HepG2 (cell line): ENCODE measurements at regions of chr11 and their contacts with region 1.

Region 1: DNA sequence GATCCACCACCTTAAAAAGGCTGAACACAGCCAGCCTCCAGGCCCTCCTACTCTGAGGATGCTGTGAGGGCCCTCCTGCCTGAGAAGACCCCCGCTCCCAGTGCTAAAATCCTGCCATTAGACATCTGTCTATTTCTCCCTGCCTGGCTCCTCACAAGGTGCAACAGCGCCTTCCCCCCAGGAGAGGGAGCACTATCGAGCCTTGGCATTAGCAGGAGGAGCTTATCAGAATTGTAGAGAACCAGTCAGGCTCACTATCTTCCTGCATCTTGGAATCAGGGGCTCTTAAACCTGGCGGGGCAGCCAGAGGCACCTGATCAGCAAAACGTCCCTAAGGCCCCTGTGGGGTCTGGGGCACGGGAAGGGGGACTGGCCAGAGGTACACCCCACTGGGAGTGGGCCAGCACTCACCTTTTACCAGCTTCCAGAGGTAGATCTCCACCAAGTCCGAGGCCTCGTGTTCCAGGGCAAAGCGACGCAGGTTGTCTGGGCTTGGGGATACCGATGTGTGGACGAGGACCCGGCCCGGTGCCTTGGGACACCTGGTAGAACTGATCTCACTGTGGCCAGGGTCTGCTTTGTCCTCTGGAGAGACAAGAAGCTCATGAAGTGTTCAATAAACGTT is 28.7 kb downstream of the CHRDL2 start:
- DNase-seq: peak; percentile 63
- ATAC-seq: peak; percentile 80
- H3K4me3 ChIP-seq: no peak overlapping the region
- H3K27ac ChIP-seq: no peak overlapping the region
- H3K4me1 ChIP-seq: peaks cover 6% of the 10 kb centered on the region
- H3K27me3 ChIP-seq: peaks cover 4 to 26% of the 10 kb centered on the region in 2 experiments; a peak in 2 of 5 replicates
- CTCF ChIP-seq: peak; percentile 89
- EP300 ChIP-seq: no peak
- POLR2A ChIP-seq: no peak
- RAD21 ChIP-seq: peak; percentile 75

Region 2: DNA sequence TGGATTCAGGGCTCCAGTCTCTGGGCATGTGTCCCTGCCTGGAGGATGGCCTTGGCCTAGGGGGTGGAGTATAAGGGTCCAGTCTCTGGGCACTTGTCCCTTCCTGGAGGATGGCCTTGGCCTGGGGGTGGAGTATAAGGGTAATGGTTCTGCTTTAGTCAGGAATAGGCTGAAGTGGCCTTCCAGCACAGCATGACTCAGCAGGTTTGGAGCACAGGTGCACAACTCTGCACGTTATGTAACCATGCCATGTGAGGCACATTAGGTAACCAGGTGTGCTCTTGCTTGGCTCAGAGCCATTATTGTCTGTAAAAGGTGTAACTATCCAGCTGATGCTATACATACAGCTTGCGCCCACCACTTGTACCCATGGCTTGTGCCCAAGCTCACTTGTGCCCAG is 158.5 kb before region 1 on chr11:
- CTCF ChIA-PET with region 1: no interaction called
- POLR2A ChIA-PET with region 1: no interaction called
- in situ Hi-C with region 1: no loop called
- intact Hi-C with region 1: no loop called
- DNase-seq: no peak
- ATAC-seq: no peak
- H3K4me3 ChIP-seq: no peak overlapping the region
- H3K27ac ChIP-seq: no peak overlapping the region
- H3K4me1 ChIP-seq: no peaks in the 10 kb centered on the region
- H3K27me3 ChIP-seq: peaks cover 0 to 29% of the 10 kb centered on the region in 2 experiments; a peak in 2 of 5 replicates
- CTCF ChIP-seq: no peak
- EP300 ChIP-seq: no peak
- POLR2A ChIP-seq: no peak
- RAD21 ChIP-seq: no peak

Region 3: GRCh38 chr11:74726547-74727182 is 24.2 kb after region 1 on chr11:
- CTCF ChIA-PET with region 1: interaction called, 24 read pairs
- POLR2A ChIA-PET with region 1: interaction called, 4 read pairs
- in situ Hi-C with region 1: no loop called
- intact Hi-C with region 1: loop called (anchors 1 kb)
- DNase-seq: peak; percentile 58
- ATAC-seq: peak; percentile 95
- H3K4me3 ChIP-seq: no peak overlapping the region
- H3K27ac ChIP-seq: no peak overlapping the region
- H3K4me1 ChIP-seq: peaks cover 20% of the 10 kb centered on the region
- H3K27me3 ChIP-seq: peaks cover 4 to 87% of the 10 kb centered on the region in 2 experiments; a peak in 4 of 5 replicates
- CTCF ChIP-seq: peak; percentile 95
- EP300 ChIP-seq: no peak
- POLR2A ChIP-seq: no peak
- RAD21 ChIP-seq: peak; percentile 84

Region 4: DNA sequence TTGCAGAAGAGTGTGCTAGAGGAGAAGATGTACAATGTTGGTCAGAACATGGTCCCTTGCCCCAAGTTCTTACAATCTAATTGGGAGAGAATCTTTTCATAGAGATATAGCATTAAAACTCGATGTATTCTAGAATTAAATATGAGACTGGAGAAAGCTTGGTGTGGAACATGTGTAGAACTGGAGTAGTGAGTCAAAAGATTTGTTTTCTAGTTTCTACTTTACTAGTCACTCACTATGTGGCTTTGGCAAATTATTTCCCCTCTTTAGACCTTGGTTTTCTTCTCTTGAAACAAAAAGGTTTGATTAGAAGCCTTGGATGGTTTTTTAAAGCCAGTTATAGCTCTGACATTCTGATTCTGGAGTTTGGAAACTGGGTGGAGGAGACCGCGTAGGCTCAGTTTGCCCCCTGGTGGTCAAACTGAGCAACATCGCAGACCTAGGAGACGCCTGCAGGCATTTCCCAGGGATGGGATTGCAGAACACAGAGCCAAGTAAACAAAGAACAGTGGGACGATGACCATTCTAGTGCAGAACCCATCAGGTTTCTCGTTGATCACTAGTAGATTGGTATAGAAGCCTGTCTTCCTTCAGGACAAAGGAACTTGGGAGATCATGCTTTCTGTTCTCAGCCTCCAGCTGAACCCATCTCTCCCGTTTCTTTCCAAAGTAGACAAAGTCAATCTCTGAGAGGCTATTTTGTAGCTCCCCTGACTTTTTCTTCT is 37.2 kb after region 1 on chr11:
- CTCF ChIA-PET with region 1: interaction called, 47 read pairs
- POLR2A ChIA-PET with region 1: interaction called, 7 read pairs
- in situ Hi-C with region 1: loop called (anchors 5 kb)
- intact Hi-C with region 1: loop called (anchors 1 kb)
- DNase-seq: peak; percentile 69
- ATAC-seq: peak; percentile 96
- H3K4me3 ChIP-seq: no peak overlapping the region
- H3K27ac ChIP-seq: no peak overlapping the region
- H3K4me1 ChIP-seq: peaks cover 39% of the 10 kb centered on the region
- H3K27me3 ChIP-seq: peaks cover 0 to 9% of the 10 kb centered on the region in 2 experiments; a peak in 1 of 5 replicates
- CTCF ChIP-seq: peak; percentile 85
- EP300 ChIP-seq: no peak
- POLR2A ChIP-seq: no peak
- RAD21 ChIP-seq: peak; percentile 85